H1 (cell line): ENCODE measurements at regions of chr12 and their contacts with region 1.

Region 1: GRCh38 chr12:124036674-124037109 is 63.7 kb downstream of the ZNF664 start:
- DNase-seq: peak in 1 of 2 experiments; percentile 61
- H3K4me3 ChIP-seq: no peak overlapping the region
- H3K27ac ChIP-seq: no peak overlapping the region
- H3K4me1 ChIP-seq: peaks cover 0 to 7% (median 0%) of the 10 kb centered on the region in 4 experiments; a peak in 2 of 7 replicates
- H3K27me3 ChIP-seq: no peaks in the 10 kb centered on the region
- CTCF ChIP-seq: peak; percentile 58 to 80 (median 67); a peak in 3 of 4 replicates
- EP300 ChIP-seq: no peak
- POLR2A ChIP-seq: no peak
- RAD21 ChIP-seq: peak; percentile 89 to 90

Region 2: DNA sequence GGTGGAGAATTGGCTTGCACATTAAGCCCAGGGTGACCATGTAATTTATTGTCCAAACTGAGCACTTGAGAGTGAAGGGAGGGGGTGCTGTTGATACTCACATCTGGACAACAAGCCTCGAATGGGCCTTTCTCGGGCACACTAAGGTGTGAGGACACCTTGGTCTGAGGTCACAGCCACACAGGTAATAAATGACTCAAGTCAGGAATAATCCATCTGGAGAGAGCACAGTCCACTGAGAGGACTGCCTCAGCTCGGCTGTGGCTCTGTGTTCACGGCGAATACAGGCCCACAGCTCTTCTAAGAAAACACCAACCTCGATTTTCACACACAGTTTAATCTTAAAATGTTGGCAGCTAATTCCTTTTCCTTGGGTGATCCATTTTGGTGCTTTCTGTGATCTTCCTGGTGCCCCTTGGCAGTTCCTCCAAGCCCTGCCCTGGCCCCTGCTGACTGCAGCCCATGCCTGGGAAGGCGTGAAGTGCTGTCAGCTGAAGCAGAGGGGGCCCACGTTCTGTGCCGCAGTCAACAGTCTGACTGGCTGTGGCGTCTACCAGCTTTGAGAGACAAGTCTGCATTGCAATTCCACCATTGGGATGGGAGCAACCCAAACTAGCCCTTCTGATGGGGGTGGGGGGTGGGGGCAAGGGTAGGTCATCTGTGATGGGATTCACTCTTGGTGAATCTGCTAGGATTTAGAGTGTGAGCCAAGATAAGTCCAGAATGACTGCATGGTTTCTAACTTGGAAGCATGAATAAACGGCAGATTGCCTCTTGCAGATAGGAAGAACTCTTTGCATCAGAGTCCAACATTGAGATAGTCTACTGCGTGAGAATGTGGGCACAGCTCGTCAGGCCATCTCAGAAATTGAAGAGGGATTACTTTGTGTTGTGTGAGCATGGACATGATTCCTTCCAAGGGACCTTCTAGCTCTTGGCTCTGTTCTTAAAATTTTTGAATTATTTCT is 20.9 kb before region 1 on chr12:
- CTCF ChIA-PET with region 1: interaction called, 14 read pairs
- POLR2A ChIA-PET with region 1: no interaction called
- DNase-seq: no peak
- H3K4me3 ChIP-seq: no peak overlapping the region
- H3K27ac ChIP-seq: no peak overlapping the region
- H3K4me1 ChIP-seq: no peaks in the 10 kb centered on the region
- H3K27me3 ChIP-seq: no peaks in the 10 kb centered on the region
- CTCF ChIP-seq: no peak
- EP300 ChIP-seq: no peak
- POLR2A ChIP-seq: no peak
- RAD21 ChIP-seq: no peak

Region 3: DNA sequence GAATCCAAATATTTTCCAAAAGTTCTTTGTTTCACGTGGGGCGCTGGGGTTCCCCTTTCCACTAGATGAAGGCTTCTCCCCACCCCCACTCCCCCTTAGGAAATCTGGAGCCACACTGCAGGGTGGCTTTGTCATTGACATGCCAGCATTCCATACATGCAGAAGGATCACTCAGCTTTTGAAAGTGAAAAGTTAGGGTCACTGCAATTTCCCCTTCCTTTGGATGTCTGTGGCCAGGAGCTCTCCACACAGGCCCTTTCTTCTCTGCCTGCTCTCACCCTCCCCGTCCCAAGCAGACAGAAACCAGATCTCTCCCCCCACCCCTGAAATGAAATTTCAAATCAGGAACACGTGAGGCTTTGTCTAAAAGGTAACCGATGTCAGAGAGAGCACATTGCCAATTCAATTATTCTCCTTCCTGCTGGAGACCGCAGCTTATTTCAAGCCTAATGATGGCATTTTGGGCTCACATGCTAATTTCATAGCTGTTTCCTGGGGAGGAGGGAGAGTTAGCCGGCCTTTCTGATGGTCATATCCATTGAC is 104.3 kb after region 1 on chr12:
- CTCF ChIA-PET with region 1: interaction called, 13 read pairs
- POLR2A ChIA-PET with region 1: no interaction called
- DNase-seq: peak in 1 of 2 experiments; percentile 53
- H3K4me3 ChIP-seq: peak overlapping the region in 1 of 4 experiments; percentile 31; a peak in 2 of 8 replicates
- H3K27ac ChIP-seq: peak overlapping the region; percentile 79
- H3K4me1 ChIP-seq: peaks cover 5 to 27% (median 15%) of the 10 kb centered on the region in 4 experiments; a peak in 5 of 7 replicates
- H3K27me3 ChIP-seq: no peaks in the 10 kb centered on the region
- CTCF ChIP-seq: no peak
- EP300 ChIP-seq: peak in 1 of 2 experiments; percentile 89; a peak in 1 of 3 replicates
- POLR2A ChIP-seq: peak in 1 of 2 experiments; percentile 68; a peak in 2 of 3 replicates
- RAD21 ChIP-seq: peak in 1 of 2 experiments; percentile 24; a peak in 2 of 4 replicates

Region 4: GRCh38 chr12:124160097-124160756 is 123.5 kb after region 1 on chr12:
- CTCF ChIA-PET with region 1: no interaction called
- POLR2A ChIA-PET with region 1: no interaction called
- DNase-seq: no peak
- H3K4me3 ChIP-seq: no peak overlapping the region
- H3K27ac ChIP-seq: no peak overlapping the region
- H3K4me1 ChIP-seq: peaks cover 0 to 10% (median 6%) of the 10 kb centered on the region in 4 experiments; a peak in 5 of 7 replicates
- H3K27me3 ChIP-seq: peaks cover 0 to 2% (median 0%) of the 10 kb centered on the region in 4 experiments; a peak in 1 of 7 replicates
- CTCF ChIP-seq: no peak
- EP300 ChIP-seq: no peak
- POLR2A ChIP-seq: no peak
- RAD21 ChIP-seq: no peak; a peak in 1 of 4 replicates

Region 5: GRCh38 chr12:124279846-124280360 is 243.2 kb after region 1 on chr12:
- CTCF ChIA-PET with region 1: interaction called, 12 read pairs
- POLR2A ChIA-PET with region 1: no interaction called
- DNase-seq: no peak
- H3K4me3 ChIP-seq: no peak overlapping the region
- H3K27ac ChIP-seq: no peak overlapping the region
- H3K4me1 ChIP-seq: peaks cover 0 to 19% (median 4%) of the 10 kb centered on the region in 4 experiments; a peak in 4 of 7 replicates
- H3K27me3 ChIP-seq: no peaks in the 10 kb centered on the region; a peak in 1 of 7 replicates
- CTCF ChIP-seq: no peak
- EP300 ChIP-seq: no peak
- POLR2A ChIP-seq: no peak
- RAD21 ChIP-seq: no peak

Region 6: GRCh38 chr12:124311292-124312109 is 274.8 kb after region 1 on chr12:
- CTCF ChIA-PET with region 1: interaction called, 25 read pairs
- POLR2A ChIA-PET with region 1: no interaction called
- DNase-seq: no peak
- H3K4me3 ChIP-seq: no peak overlapping the region
- H3K27ac ChIP-seq: no peak overlapping the region
- H3K4me1 ChIP-seq: peaks cover 0 to 15% (median 6%) of the 10 kb centered on the region in 4 experiments; a peak in 6 of 7 replicates
- H3K27me3 ChIP-seq: no peaks in the 10 kb centered on the region
- CTCF ChIP-seq: no peak
- EP300 ChIP-seq: no peak
- POLR2A ChIP-seq: no peak
- RAD21 ChIP-seq: no peak

Region 7: GRCh38 chr12:124767066-124767821 is 730.6 kb after region 1 on chr12:
- CTCF ChIA-PET with region 1: interaction called, 12 read pairs
- POLR2A ChIA-PET with region 1: no interaction called
- DNase-seq: peak in 1 of 2 experiments; percentile 97
- H3K4me3 ChIP-seq: no peak overlapping the region
- H3K27ac ChIP-seq: no peak overlapping the region
- H3K4me1 ChIP-seq: peaks cover 0 to 6% (median 1%) of the 10 kb centered on the region in 4 experiments; a peak in 4 of 7 replicates
- H3K27me3 ChIP-seq: peaks cover 0 to 4% (median 0%) of the 10 kb centered on the region in 4 experiments; a peak in 2 of 7 replicates
- CTCF ChIP-seq: peak; percentile 90 to 94 (median 94)
- EP300 ChIP-seq: no peak
- POLR2A ChIP-seq: no peak
- RAD21 ChIP-seq: peak; percentile 97